A549 (cell line): ENCODE measurements at regions of chr17 and their contacts with region 1.

Region 1: DNA sequence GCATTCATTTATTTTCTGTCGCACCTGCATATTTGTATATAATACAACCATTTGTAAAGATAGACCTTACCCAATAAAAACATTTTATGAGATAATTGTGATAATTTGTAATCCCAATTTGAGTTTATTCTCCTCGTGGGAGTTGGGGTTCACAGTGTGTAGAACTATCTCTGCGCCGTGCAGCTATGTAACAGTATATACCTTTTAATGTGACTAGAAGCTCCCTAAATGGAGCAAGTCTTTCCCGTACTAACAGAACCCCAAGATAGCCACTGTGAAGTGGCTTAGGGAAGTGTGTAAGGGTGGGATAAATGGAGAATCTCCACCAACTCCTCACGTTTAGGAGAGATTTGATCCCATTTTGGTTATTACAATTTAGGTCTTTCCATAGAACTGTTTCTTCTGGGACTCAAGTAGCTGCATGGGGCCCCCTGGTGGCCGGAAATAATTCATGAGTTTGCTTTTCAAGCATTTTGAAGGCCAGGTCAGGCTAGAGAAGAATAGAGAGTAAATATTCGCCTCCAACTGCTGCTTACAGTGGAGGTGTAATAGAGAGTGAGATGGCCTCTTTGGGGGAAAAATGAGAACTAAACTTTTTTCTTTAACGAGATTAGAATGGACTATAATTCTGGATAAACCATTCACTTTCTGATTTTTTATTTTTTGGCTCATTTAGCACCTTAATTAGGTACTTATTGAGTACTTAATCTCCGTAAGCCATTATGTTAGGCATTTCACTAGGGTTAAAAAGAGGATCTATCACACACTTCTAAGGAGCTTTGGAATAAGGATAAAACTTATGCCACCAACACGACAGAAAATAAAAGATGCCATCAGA is 4.5 kb downstream of the TMEM100 start:
- DNase-seq: peak; percentile 39 to 78
- ATAC-seq: peak; percentile 72 to 88
- H3K4me3 ChIP-seq: no peak overlapping the region
- H3K27ac ChIP-seq: no peak overlapping the region
- H3K4me1 ChIP-seq: peaks cover 7% of the 10 kb centered on the region; the same call in 2 of the 3 replicates
- CTCF ChIP-seq: peak; percentile 91
- EP300 ChIP-seq: no peak
- POLR2A ChIP-seq: no peak
- RAD21 ChIP-seq: peak; percentile 71 to 84

Region 2: GRCh38 chr17:55607731-55608341 is 110.3 kb before region 1 on chr17:
- CTCF ChIA-PET with region 1: interaction called, 19 read pairs
- POLR2A ChIA-PET with region 1: no interaction called
- DNase-seq: peak; percentile 25 to 81
- ATAC-seq: peak; percentile 82 to 85
- H3K4me3 ChIP-seq: no peak overlapping the region
- H3K27ac ChIP-seq: peak overlapping the region; percentile 53 to 64; a peak in 5 of 6 replicates
- H3K4me1 ChIP-seq: peaks cover 18% of the 10 kb centered on the region
- CTCF ChIP-seq: no peak
- EP300 ChIP-seq: peak; percentile 63; a peak in 4 of 5 replicates
- POLR2A ChIP-seq: no peak
- RAD21 ChIP-seq: no peak

Region 3: GRCh38 chr17:55690105-55690508 is 28.0 kb before region 1 on chr17:
- CTCF ChIA-PET with region 1: interaction called, 18 read pairs
- POLR2A ChIA-PET with region 1: no interaction called
- DNase-seq: no peak
- ATAC-seq: no peak
- H3K4me3 ChIP-seq: no peak overlapping the region
- H3K27ac ChIP-seq: no peak overlapping the region
- H3K4me1 ChIP-seq: no peaks in the 10 kb centered on the region
- CTCF ChIP-seq: no peak
- EP300 ChIP-seq: no peak
- POLR2A ChIP-seq: no peak
- RAD21 ChIP-seq: no peak

Region 4: DNA sequence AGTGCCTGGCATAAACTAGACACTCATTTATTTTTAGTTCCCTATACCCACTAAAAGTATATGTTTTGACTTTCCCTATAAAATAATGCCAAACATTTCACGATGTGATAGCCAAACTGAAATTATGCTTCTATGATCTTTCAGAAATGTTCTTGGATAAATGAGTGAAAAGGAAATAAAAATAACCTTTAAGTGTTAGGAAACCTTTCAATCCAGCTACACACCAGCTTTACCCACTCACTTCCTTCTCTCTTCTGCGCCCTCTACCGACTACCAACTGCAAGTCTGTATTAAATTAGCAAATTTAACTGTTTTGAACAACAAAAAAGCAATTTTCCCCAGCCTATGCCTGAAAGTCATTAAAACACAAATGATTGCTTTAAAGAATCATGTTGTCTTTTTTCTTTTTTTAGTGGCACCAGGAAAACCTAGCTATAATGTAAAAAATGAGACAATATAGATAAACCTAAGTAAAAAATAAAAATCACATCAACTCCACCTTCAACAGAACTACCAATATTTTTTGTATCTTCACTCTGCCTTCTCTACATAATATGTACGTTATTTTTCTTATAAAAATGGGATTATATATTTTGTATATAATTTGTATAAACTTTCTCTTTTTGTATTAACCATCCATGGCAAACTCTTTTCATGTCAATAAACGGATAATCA is 17.8 kb after region 1 on chr17:
- CTCF ChIA-PET with region 1: interaction called, 41 read pairs
- POLR2A ChIA-PET with region 1: no interaction called
- DNase-seq: peak; percentile 30 to 72
- ATAC-seq: peak; percentile 52 to 79; a peak in 3 of 6 replicates
- H3K4me3 ChIP-seq: no peak overlapping the region
- H3K27ac ChIP-seq: no peak overlapping the region
- H3K4me1 ChIP-seq: no peaks in the 10 kb centered on the region
- CTCF ChIP-seq: peak; percentile 86
- EP300 ChIP-seq: no peak
- POLR2A ChIP-seq: no peak
- RAD21 ChIP-seq: peak; percentile 56 to 58

Region 5: GRCh38 chr17:55770148-55770870 is 52.2 kb after region 1 on chr17:
- CTCF ChIA-PET with region 1: interaction called, 75 read pairs
- POLR2A ChIA-PET with region 1: no interaction called
- DNase-seq: peak; percentile 64 to 84
- ATAC-seq: peak; percentile 76 to 93; a peak in 5 of 6 replicates
- H3K4me3 ChIP-seq: no peak overlapping the region
- H3K27ac ChIP-seq: peak overlapping the region in 1 of 2 experiments; percentile 12; a peak in 1 of 6 replicates
- H3K4me1 ChIP-seq: peaks cover 9% of the 10 kb centered on the region
- CTCF ChIP-seq: peak; percentile 91
- EP300 ChIP-seq: no peak
- POLR2A ChIP-seq: no peak
- RAD21 ChIP-seq: peak; percentile 82 to 90